GM12878 (cell line): ENCODE measurements at regions of chr20 and their contacts with region 1.

Region 1: DNA sequence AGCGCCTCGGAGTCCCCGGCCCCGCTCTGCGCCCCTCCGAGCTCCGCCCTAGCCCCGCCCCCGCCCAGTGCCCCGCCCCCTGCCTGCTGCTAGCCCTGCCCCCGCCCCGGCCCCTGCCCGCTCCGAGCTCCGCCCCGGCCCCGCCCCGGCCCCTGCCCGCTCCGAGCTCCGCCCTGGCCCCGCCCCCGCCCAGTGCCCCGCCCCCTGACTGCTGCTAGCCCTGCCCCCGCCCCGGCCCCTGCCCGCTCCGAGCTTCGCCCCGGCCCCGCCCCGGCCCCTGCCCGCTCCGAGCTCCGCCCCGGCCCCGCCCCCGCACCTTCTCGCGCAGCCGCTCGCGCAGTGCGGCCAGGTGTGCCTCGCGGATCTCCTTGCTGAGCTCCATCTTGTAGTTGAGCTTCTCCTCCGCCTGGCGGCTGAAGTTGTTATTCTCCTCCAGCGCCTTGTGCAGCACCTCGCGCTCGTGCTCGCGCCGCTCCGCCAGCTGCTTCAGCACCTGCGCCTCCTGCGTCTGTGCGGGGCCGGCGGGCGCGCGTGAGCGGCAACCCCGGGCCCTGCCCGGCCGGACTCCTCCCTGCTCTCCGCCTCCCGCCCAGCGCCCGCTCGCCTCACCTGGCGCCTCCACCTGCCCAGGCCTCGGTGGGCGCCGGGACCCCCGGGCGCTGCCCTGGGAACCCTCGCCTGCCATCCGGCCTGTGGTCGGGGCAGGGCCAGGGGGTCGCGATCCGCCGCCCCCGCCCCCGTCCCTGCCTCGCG is 11.3 kb downstream of the STMN3 start:
- DNase-seq: peak; percentile 48
- ATAC-seq: peak; percentile 78
- H3K4me3 ChIP-seq: peak overlapping the region; percentile 92
- H3K27ac ChIP-seq: peak overlapping the region; percentile 74
- H3K4me1 ChIP-seq: peaks cover 17% of the 10 kb centered on the region
- H3K27me3 ChIP-seq: no peaks in the 10 kb centered on the region; a peak in 1 of 4 replicates
- CTCF ChIP-seq: peak; percentile 38 to 51 (median 41); a peak in 5 of 6 replicates
- EP300 ChIP-seq: no peak
- POLR2A ChIP-seq: no peak
- RAD21 ChIP-seq: peak; percentile 44

Region 2: DNA sequence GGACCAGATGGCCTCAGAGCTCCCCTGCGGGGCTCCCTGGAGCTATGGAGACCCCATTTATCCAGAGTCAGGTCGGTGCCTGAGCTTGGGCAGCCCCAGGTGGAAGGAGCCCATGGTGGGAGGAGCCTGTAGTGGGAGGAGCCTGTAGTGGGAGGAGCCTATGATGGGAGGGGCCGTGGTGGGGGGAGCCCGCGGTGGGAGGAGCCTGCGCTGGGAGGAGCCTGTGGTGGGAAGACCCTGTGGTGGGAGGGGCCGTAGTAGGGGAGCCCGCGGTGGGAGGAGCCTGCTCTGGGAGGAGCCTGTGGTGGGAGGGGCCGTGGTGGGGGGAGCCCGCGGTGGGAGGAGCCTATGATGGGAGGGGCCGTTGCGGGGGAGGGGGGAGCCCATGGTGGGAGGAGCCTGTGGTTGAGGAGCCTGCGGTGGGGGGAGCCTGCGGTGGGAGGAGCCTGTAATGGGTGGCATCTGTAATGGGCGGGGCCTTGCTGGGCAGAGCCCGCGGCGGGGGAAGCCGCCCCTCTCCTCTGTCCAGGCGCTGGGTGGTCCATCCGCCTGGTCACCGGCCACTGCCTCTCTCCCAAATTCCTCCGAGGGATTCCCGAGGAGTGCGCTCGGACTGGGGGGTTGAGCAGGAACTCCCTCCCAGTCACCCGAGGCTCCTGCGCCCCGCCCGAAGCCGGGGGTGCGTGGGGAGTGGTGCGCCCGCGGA is 88.6 kb before region 1 on chr20:
- CTCF ChIA-PET with region 1: interaction called, 6 read pairs
- POLR2A ChIA-PET with region 1: interaction called, 6 read pairs
- RAD21 ChIA-PET with region 1: interaction called, 14 read pairs
- SMC1A ChIA-PET with region 1: interaction called, 4 read pairs
- in situ Hi-C with region 1: no loop called
- intact Hi-C with region 1: no loop called
- DNase-seq: peak; percentile 35
- ATAC-seq: peak; percentile 71
- H3K4me3 ChIP-seq: peak overlapping the region; percentile 65; the same call in 1 of the 2 replicates
- H3K27ac ChIP-seq: peak overlapping the region; percentile 64
- H3K4me1 ChIP-seq: peaks cover 22% of the 10 kb centered on the region
- H3K27me3 ChIP-seq: no peaks in the 10 kb centered on the region; a peak in 1 of 4 replicates
- CTCF ChIP-seq: no peak
- EP300 ChIP-seq: no peak
- POLR2A ChIP-seq: no peak
- RAD21 ChIP-seq: no peak

Region 3: GRCh38 chr20:63580796-63581461 is 61.0 kb before region 1 on chr20:
- CTCF ChIA-PET with region 1: interaction called, 10 read pairs
- POLR2A ChIA-PET with region 1: no interaction called
- RAD21 ChIA-PET with region 1: interaction called, 15 read pairs
- SMC1A ChIA-PET with region 1: no interaction called
- in situ Hi-C with region 1: no loop called
- intact Hi-C with region 1: no loop called
- DNase-seq: no peak
- ATAC-seq: peak; percentile 94
- H3K4me3 ChIP-seq: no peak overlapping the region
- H3K27ac ChIP-seq: no peak overlapping the region
- H3K4me1 ChIP-seq: no peaks in the 10 kb centered on the region
- H3K27me3 ChIP-seq: no peaks in the 10 kb centered on the region
- CTCF ChIP-seq: peak; percentile 65 to 86 (median 70)
- EP300 ChIP-seq: no peak
- POLR2A ChIP-seq: no peak
- RAD21 ChIP-seq: peak; percentile 84

Region 4: DNA sequence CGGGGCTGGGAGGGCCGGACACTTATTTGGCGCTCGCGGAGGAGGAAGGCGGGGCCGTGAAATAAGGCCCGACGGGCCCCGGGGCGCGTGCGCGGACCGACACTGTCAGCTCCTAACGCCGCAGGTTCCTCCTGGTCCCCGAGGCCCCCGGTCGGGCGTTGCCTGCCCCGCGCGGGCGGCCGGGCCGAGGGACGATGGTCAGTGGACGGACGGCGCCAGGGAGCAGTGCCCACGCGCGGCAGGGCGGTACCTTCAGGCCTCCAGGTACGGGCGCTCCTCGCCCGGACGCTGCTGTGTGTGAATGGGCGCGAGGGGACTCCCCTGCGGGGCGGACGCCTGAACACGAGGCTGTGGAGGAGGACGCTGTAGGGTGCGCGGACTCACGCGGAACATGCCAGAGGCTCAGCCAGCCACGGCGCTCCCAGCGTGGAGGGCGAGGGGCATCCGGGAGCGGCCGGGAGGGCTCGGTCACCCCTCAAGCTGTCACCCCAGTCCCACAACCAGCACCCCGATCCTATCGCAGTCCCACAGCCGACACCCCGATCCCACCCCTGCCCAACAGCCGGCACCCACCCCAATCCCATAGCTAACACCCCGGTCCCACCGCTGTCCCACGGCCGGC is 14.7 kb before region 1 on chr20:
- CTCF ChIA-PET with region 1: interaction called, 9 read pairs
- POLR2A ChIA-PET with region 1: interaction called, 17 read pairs
- RAD21 ChIA-PET with region 1: interaction called, 33 read pairs
- SMC1A ChIA-PET with region 1: interaction called, 10 read pairs
- in situ Hi-C with region 1: no loop called
- intact Hi-C with region 1: no loop called
- DNase-seq: peak; percentile 57
- ATAC-seq: peak; percentile 84
- H3K4me3 ChIP-seq: peak overlapping the region; percentile 94
- H3K27ac ChIP-seq: peak overlapping the region; percentile 73
- H3K4me1 ChIP-seq: peaks cover 8% of the 10 kb centered on the region
- H3K27me3 ChIP-seq: no peaks in the 10 kb centered on the region
- CTCF ChIP-seq: no peak
- EP300 ChIP-seq: no peak
- POLR2A ChIP-seq: peak; percentile 92
- RAD21 ChIP-seq: no peak

Region 5: DNA sequence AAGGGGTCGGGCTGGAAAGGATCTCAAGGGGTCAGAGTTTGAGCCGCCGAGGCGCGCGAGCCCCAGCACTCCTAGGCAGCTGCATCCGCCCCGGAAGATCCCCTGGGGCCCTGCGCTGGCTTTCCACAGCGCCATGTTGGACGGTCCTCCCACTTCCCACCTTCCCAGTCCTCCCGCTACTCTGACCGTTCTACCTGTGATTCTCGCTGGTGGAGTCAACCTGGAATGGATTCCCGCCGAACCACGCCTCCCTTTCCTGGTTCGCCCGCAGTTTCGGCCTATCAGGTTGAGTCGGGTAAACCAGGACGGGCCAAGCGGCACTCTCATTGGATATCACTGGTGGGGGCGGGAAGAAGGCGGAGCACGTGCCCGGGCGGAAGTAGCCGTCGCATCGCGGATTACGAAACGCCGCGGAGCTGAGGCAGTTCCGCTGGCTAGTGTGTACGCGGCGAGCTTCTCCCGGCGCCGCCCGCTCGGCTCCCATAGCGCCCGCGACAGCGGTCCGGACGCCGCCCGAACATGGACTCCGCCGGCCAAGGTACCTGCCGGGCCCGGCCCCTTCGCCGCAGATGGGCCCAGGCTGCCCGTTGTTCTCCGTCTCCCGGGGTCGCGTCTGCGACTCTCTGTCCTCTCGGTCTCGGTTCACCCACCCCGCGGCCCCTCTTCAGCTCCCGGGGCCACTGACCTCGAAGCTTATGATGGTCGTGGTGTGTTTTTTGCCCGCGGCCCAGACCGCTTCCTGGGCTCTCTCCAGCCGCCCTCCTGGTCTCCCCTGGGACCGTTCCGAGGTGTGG is 223.1 kb after region 1 on chr20 and contains the start of gene TPD52L2:
- CTCF ChIA-PET with region 1: interaction called, 6 read pairs
- POLR2A ChIA-PET with region 1: no interaction called
- RAD21 ChIA-PET with region 1: interaction called, 16 read pairs
- SMC1A ChIA-PET with region 1: no interaction called
- in situ Hi-C with region 1: no loop called
- intact Hi-C with region 1: no loop called
- DNase-seq: peak; percentile 94
- ATAC-seq: peak; percentile 91
- H3K4me3 ChIP-seq: peak within 1 kb of the TSS; percentile 96
- H3K27ac ChIP-seq: peak within 1 kb of the TSS; percentile 90
- H3K4me1 ChIP-seq: peaks cover 7% of the 10 kb centered on the region
- H3K27me3 ChIP-seq: no peaks in the 10 kb centered on the region
- CTCF ChIP-seq: no peak
- EP300 ChIP-seq: 0 out of 4 replicates have a peak, but pooled peaks of 1 of the 2 experiments have one; percentile 19
- POLR2A ChIP-seq: peak; percentile 96
- RAD21 ChIP-seq: no peak
- polyA plus RNA-seq, gene TPD52L2: 1.6 to 4.1 TPM